ENCODE measurements at regions of chr3 and their contacts with region 1.

Region 1: DNA sequence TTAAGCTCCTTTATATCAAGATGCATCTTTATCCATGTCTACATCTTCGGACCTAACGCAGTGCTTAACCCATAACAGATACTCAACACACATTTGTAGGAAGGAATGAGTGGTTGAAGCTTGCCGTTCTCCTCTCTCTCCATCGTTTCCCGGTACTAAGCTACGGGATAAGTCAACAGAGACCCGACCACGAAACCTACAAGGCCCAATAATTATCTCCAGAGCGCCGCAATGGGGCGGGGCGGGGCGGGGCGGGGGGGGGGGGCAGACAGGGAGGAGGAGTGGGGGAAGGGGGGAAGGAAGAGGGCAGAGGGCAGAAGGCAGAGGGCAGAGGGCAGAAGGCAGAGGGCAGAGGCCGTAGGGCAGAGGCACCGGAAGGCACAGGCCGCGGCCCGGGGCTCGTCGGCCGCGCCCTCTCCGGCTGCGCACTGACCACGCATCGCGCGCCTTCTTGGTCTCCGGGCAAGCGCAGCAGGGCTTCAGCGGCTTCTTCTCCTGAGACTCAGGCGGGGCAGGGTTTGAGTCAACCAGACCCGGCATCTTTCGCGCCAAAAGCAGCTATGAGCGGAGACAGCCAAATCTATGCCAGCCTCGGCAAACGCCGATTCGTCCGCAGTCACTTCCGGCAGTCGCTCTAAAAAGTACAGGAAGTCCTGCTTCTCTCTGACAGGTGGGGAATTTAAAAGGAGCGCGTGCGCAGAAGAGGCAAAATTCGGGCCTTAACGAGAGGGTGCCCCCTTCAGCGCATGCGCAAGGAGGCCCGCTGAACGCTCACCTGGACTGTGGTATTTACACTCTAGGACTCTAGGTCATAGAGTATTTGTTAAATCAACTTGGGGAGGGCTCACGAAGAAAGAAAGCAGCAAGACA is at the start of gene COX17:
- DNase-seq: peak; percentile 97
- ATAC-seq: peak; percentile 88
- H3K4me3 Mint-ChIP-seq: peak within 1 kb of the TSS; percentile 82
- H3K27ac Mint-ChIP-seq: peak within 1 kb of the TSS; percentile 96
- H3K4me1 Mint-ChIP-seq: peaks cover 36% of the 10 kb centered on the region
- H3K27me3 Mint-ChIP-seq: no peaks in the 10 kb centered on the region
- CTCF ChIP-seq: no peak
- total RNA-seq, gene COX17: 83.6 to 86.7 TPM

Region 2: GRCh38 chr3:119463171-119464169 is 213.5 kb before region 1 on chr3 and contains the start of gene TMEM39A:
- CTCF ChIA-PET with region 1: interaction called, 6 read pairs
- POLR2A ChIA-PET with region 1: interaction called, 11 read pairs
- intact Hi-C with region 1: loop called (anchors 10 kb)
- DNase-seq: peak; percentile 99
- ATAC-seq: peak; percentile 90
- H3K4me3 Mint-ChIP-seq: peak within 1 kb of the TSS; percentile 95
- H3K27ac Mint-ChIP-seq: peak within 1 kb of the TSS; percentile 97
- H3K4me1 Mint-ChIP-seq: peaks cover 35% of the 10 kb centered on the region
- H3K27me3 Mint-ChIP-seq: no peaks in the 10 kb centered on the region
- CTCF ChIP-seq: no peak
- total RNA-seq, gene TMEM39A: 26.0 to 30.7 TPM

Region 3: GRCh38 chr3:119664850-119665379 is 12.1 kb before region 1 on chr3:
- CTCF ChIA-PET with region 1: interaction called, 7 read pairs
- POLR2A ChIA-PET with region 1: interaction called, 10 read pairs
- intact Hi-C with region 1: no loop called
- DNase-seq: no peak
- ATAC-seq: no peak
- H3K4me3 Mint-ChIP-seq: no peak overlapping the region
- H3K27ac Mint-ChIP-seq: peak overlapping the region; percentile 25
- H3K4me1 Mint-ChIP-seq: peaks cover 9% of the 10 kb centered on the region
- H3K27me3 Mint-ChIP-seq: no peaks in the 10 kb centered on the region
- CTCF ChIP-seq: no peak

Region 4: GRCh38 chr3:119690043-119690656 is 13.1 kb after region 1 on chr3:
- CTCF ChIA-PET with region 1: interaction called, 31 read pairs
- POLR2A ChIA-PET with region 1: interaction called, 3 read pairs
- intact Hi-C with region 1: no loop called
- DNase-seq: no peak
- ATAC-seq: no peak
- H3K4me3 Mint-ChIP-seq: no peak overlapping the region
- H3K27ac Mint-ChIP-seq: no peak overlapping the region
- H3K4me1 Mint-ChIP-seq: no peaks in the 10 kb centered on the region
- H3K27me3 Mint-ChIP-seq: peaks cover 4% of the 10 kb centered on the region
- CTCF ChIP-seq: peak; percentile 67

Region 5: DNA sequence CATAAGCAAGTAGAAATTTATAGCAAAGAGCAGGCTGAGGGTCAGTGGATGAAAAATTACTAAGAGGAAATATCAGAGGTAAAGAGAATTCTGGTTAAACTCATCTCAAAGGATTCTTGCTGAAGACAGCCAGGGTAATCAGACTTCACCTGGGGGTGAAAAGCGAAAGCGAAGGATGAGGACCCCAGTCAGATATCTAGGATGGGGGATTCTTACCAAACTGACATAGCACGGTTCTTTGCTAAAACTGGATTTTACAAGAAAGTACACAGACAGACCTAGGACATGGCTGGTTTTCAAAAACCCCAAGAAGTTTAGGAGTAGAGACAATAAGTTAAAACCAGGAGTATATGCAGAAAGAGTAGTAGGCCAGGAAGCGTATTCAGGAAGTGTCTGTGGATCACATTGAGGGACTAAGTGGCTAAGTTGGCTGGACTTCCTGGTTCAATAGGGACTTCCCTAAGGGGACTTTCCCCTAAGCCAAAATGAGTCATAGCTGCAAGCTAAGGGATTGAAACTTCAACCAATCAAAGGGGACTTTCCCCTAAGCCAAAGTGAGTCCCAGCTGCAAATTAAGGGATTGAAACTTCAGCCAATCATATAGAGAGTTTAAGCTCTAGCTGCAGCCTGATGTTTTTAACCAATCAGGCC is 23.4 kb after region 1 on chr3:
- CTCF ChIA-PET with region 1: interaction called, 19 read pairs
- POLR2A ChIA-PET with region 1: interaction called, 5 read pairs
- intact Hi-C with region 1: no loop called
- DNase-seq: peak; percentile 54
- ATAC-seq: peak; percentile 62
- H3K4me3 Mint-ChIP-seq: no peak overlapping the region
- H3K27ac Mint-ChIP-seq: peak overlapping the region; percentile 95
- H3K4me1 Mint-ChIP-seq: peaks cover 38% of the 10 kb centered on the region
- H3K27me3 Mint-ChIP-seq: peaks cover 4% of the 10 kb centered on the region
- CTCF ChIP-seq: no peak

Measured in activated CD8-positive, alpha-beta T cell treated with anti-CD3 and anti-CD28 coated beads for 36 hours (primary cell).